Common myeloid progenitor, CD34-positive (primary cell): ENCODE measurements at regions of chr9 and their contacts with region 1.

Region 1: DNA sequence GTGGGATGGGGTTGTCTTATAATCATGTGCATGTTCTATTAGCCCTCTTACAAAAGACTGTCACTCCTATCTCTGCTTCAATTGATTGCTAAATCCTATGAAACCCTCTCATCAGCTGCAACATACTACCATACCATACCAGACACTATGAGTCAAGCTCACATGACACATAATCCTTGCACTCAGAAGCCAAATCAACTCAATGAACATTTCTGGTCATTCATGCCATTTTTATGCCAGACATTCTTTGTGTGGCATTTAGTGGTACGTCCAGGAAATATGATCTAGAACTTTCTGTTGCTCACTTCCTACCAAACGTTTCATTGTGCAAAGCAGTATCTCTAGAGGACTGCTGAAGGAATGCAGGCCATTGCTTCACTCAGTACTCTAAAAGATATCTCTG is 159.2 kb upstream of the GNA14 start:
- DNase-seq: peak in 2 of 3 donors; percentile 27 to 39
- H3K4me3 ChIP-seq: no peak overlapping the region
- H3K27ac ChIP-seq: no peak overlapping the region
- H3K4me1 ChIP-seq: peaks cover 0 to 16% (median 0%) of the 10 kb centered on the region in 4 experiments
- H3K27me3 ChIP-seq: no peaks in the 10 kb centered on the region

Region 2: DNA sequence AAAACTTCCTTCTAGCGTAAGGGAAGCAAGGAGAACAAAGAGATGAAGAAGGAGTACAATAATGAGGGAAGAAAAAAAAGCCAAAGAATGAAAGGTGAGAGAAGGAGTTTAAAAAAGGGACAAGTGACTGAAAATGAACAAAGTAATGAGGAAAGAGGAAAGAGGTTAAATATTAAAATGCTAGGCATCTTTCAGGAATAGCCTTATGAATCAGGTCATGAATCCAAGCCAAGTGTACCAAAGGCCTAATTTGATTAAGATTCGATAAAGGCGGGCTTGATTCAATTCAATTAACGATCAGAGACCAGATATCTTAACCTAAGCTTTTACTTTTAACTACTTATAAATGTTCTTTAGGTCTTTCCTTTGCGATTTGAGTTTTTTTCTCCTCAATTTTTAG is 17.4 kb before region 1 on chr9:
- CTCF ChIA-PET with region 1: interaction called, 16 read pairs
- POLR2A ChIA-PET with region 1: no interaction called
- DNase-seq: no peak
- H3K4me3 ChIP-seq: no peak overlapping the region
- H3K27ac ChIP-seq: no peak overlapping the region
- H3K4me1 ChIP-seq: no peaks in the 10 kb centered on the region
- H3K27me3 ChIP-seq: no peaks in the 10 kb centered on the region

Region 3: DNA sequence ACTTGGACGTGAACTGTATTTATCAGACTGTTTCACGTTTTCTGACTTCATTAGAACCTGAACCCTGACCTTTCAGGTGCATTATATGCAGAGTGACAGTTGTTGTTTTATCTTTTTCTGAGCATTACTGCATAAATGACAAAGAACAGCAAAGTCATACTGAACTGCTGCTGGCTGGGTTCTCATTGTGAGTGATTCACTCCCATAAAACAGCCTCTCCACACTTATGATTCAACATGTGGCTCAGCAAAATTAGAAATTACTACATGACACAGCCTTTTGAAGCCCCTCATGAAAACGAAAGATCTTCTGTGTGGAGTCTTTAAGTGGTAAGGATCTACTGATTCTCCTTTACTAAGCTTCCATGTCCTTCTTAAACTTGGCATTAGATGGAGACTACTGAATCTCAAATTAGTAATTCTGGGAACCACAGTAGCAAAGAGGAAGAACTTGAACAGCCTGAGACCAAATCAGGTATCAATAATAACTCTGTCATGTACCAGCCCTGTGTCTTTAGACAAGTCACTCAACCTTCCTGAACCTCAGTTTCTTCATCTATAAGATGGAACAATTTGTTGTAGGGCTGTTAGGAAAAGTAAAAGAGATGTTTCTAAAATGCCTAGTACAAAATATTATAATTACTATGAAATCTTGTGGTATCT is 13.1 kb after region 1 on chr9:
- CTCF ChIA-PET with region 1: interaction called, 10 read pairs
- POLR2A ChIA-PET with region 1: no interaction called
- DNase-seq: peak; percentile 29 to 77 (median 71)
- H3K4me3 ChIP-seq: no peak overlapping the region
- H3K27ac ChIP-seq: no peak overlapping the region
- H3K4me1 ChIP-seq: peaks cover 7 to 11% (median 9%) of the 10 kb centered on the region in 4 experiments
- H3K27me3 ChIP-seq: no peaks in the 10 kb centered on the region